Astrocyte of the cerebellum (primary cell): ENCODE measurements at regions of chr2 and their contacts with region 1.

Region 1: DNA sequence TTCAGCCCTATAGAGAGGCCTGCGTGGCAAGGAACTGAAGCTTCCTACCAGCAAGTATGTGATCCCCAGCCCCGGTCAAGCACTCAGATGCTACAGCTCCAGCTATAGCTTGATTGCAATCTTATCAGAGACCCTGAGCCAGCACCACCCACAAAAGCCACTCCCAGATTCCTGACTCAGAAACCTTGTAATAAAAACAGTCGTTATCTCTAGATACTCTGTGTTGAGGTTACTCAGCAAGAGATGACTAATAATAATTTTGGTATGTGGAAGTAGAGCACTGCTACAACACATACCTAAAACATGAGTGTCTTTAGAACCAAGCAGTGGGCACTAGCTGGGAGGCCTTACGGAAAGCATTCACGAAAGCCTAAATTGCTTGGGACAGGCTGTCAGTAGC is 216.9 kb downstream of the UXS1 start:
- DNase-seq: peak; percentile 3
- H3K4me3 ChIP-seq: no peak overlapping the region
- CTCF ChIP-seq: no peak

Region 2: GRCh38 chr2:105553538-105554196 is 423.5 kb before region 1 on chr2:
- in situ Hi-C with region 1: no loop called
- DNase-seq: no peak
- H3K4me3 ChIP-seq: no peak overlapping the region
- CTCF ChIP-seq: no peak

Region 3: DNA sequence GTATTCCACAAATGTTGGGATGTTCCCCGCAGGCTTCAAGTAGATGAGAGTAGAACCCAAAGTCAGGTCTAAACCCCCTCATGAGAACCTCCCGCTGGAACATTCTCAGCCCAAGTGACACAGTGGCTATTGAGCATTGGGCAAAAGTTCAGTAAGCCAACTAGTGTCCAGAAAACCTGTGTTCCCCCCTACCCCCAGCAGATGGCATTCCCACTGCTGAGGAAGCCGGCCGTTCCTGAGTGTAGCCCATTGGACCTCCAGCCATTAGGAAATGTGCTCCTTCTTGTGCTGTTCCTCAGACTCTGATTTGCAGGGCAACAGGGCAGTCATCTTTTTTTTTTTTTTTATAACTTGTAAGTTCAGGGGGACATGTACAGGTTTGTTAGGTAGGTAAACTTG is 80.4 kb before region 1 on chr2:
- in situ Hi-C with region 1: loop called (anchors 10 kb)
- DNase-seq: no peak
- H3K4me3 ChIP-seq: no peak overlapping the region
- CTCF ChIP-seq: no peak

Region 4: DNA sequence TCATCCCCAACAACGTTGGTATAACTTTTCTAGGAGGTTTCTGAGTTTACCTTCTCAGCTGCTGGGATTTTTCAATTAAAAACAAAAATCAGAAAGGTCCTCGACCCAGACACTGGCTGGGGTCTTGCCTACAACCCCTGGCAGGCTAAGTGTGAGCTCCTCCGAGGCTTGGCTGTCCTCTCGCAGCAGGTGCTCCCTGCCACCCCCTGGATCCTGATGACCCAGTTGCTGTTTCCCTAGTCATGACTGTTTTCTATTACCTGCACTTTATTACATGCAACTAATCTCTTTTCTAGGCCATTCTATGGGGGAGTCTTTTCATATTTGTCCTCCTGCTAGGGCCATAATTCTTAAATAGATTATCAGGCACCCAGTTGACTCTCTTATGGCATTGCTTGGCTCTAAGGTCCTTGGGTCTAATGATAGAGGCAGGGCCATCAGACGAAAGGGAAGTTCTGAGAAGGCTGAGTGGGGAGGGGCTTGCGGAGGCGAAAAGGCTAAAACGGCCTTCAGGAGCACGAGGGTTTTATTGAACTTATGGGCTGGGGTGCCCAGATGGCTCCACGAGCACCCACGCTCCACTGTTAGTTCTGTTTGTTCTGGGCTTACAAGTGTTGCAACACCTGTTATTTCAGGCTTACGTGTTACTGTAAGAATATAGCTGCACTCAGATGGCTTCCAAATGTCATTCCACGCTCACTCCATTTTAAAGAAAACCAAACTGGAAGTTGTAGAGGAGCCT is 66.5 kb before region 1 on chr2:
- in situ Hi-C with region 1: no loop called
- DNase-seq: no peak
- H3K4me3 ChIP-seq: no peak overlapping the region
- CTCF ChIP-seq: no peak